B cell (primary cell): ENCODE measurements at regions of chr12 and their contacts with region 1.

Region 1: DNA sequence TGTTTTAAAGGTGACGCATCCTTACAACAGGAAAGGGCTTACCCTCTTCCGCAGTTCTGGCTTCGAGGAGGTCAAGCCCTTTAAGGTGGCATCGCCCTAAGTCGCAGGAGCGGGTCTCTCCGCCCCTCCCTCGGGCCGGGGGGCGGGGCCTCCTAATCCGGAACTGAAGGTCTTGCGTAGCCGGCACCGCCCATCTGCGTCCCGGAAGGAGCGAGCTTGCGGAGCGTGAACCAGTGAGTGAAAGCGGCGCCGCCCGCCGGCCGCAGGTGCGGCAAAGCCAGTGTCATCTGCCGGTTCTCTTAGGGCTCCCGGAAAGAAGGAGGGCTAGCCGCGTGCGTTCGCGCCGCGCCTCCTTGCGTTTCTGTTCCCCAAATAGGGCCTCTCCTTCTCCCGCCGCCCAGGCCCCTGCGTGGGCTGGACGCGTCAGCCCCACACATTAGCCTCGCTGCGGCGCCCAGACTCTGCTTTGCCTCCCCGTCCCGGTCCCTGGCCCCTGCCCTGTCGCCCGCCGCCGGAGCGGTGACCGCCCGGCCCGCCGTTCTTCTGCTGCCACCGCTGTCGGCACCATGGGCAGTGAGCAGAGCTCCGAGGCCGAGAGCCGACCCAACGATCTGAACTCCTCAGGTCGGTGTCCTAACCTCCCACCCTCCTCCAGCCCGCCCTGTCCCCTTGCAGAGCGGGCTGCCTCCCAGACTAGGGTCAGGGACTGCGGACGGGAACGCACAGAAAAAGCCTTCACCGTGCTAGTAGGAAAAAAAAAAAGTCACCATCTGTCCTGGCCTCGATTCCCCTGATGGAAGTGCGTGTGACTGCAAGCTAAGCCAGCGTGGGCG is at the start of gene BORCS5:
- DNase-seq: peak; percentile 100
- ATAC-seq: peak; percentile 92
- H3K4me3 ChIP-seq: peak within 1 kb of the TSS; percentile 74 to 93 (median 81)
- H3K4me3 Mint-ChIP-seq: peak within 1 kb of the TSS; percentile 92
- H3K27ac ChIP-seq: peak within 1 kb of the TSS; percentile 91 to 95
- H3K27ac Mint-ChIP-seq: peak within 1 kb of the TSS; percentile 94
- H3K4me1 ChIP-seq: peaks cover 21 to 25% of the 10 kb centered on the region in 2 donors
- H3K4me1 Mint-ChIP-seq: peaks cover 31% of the 10 kb centered on the region
- H3K27me3 ChIP-seq: no peaks in the 10 kb centered on the region
- H3K27me3 Mint-ChIP-seq: peaks cover 3% of the 10 kb centered on the region
- CTCF ChIP-seq: peak; percentile 11
- total RNA-seq, gene BORCS5: 46.2 and 51.7 TPM in 2 replicates

Region 2: GRCh38 chr12:11836282-11837151 is 520.6 kb before region 1 on chr12:
- CTCF ChIA-PET with region 1: no interaction called
- POLR2A ChIA-PET with region 1: no interaction called
- intact Hi-C with region 1: loop called (anchors 10 kb)
- DNase-seq: peak; percentile 93
- ATAC-seq: peak; percentile 96
- H3K4me3 ChIP-seq: peak overlapping the region in 2 of 5 experiments; percentile 6 to 37
- H3K4me3 Mint-ChIP-seq: peak overlapping the region; percentile 64
- H3K27ac ChIP-seq: peak overlapping the region; percentile 74 to 77
- H3K27ac Mint-ChIP-seq: peak overlapping the region; percentile 92
- H3K4me1 ChIP-seq: peaks cover 37 to 53% of the 10 kb centered on the region in 2 donors
- H3K4me1 Mint-ChIP-seq: peaks cover 67% of the 10 kb centered on the region
- H3K27me3 ChIP-seq: no peaks in the 10 kb centered on the region
- H3K27me3 Mint-ChIP-seq: no peaks in the 10 kb centered on the region
- CTCF ChIP-seq: no peak

Region 3: DNA sequence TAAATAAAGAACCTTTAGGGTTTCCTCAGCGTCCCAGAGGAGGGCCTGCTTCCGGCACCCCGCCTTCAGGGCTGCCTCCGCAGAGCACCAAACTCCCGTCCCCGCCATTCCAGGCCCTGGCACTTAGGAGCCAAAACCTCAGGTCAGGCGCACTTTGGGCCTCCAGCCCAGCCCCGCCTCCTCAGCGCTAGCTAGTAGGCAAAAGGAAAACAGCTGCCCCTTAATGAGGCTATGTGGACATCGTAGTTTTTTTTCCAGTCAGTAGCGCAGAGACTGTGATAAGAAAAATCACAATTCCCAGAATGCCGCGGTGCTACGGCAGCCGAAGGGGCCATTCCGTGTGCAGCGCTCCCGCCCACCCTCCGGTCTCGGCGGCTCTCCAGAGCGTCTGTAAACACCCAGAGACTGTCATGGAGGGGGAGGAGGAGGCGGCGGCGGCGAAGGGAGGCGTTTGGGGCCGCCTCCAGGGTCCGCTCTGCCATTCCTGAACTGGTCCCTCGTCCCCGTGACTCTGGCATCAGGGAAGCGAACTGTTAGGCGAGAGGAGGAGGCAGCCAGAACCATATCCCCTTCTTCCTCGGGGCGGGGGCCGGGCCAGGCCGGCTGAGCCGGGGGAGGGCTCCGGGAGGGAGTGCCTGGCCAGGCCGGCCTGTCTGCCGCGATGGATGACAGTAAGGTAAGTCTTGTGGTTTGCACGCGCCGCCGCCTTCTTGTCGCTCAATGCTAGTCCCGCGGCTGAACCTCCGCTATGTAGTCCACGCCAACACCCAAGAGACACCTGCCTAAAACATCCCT is 254.6 kb after region 1 on chr12 and contains the start of gene CREBL2:
- CTCF ChIA-PET with region 1: interaction called, 6 read pairs
- POLR2A ChIA-PET with region 1: interaction called, 6 read pairs
- intact Hi-C with region 1: loop called (anchors 1 kb)
- DNase-seq: peak; percentile 94
- ATAC-seq: peak; percentile 91
- H3K4me3 ChIP-seq: peak within 1 kb of the TSS; percentile 65 to 100 (median 89)
- H3K4me3 Mint-ChIP-seq: peak within 1 kb of the TSS; percentile 97
- H3K27ac ChIP-seq: peak within 1 kb of the TSS; percentile 92 to 95
- H3K27ac Mint-ChIP-seq: peak within 1 kb of the TSS; percentile 98
- H3K4me1 ChIP-seq: peaks cover 16 to 24% of the 10 kb centered on the region in 2 donors
- H3K4me1 Mint-ChIP-seq: peaks cover 32% of the 10 kb centered on the region
- H3K27me3 ChIP-seq: no peaks in the 10 kb centered on the region
- H3K27me3 Mint-ChIP-seq: no peaks in the 10 kb centered on the region
- CTCF ChIP-seq: no peak
- total RNA-seq, gene CREBL2: 20.2 and 22.1 TPM in 2 replicates

Region 4: DNA sequence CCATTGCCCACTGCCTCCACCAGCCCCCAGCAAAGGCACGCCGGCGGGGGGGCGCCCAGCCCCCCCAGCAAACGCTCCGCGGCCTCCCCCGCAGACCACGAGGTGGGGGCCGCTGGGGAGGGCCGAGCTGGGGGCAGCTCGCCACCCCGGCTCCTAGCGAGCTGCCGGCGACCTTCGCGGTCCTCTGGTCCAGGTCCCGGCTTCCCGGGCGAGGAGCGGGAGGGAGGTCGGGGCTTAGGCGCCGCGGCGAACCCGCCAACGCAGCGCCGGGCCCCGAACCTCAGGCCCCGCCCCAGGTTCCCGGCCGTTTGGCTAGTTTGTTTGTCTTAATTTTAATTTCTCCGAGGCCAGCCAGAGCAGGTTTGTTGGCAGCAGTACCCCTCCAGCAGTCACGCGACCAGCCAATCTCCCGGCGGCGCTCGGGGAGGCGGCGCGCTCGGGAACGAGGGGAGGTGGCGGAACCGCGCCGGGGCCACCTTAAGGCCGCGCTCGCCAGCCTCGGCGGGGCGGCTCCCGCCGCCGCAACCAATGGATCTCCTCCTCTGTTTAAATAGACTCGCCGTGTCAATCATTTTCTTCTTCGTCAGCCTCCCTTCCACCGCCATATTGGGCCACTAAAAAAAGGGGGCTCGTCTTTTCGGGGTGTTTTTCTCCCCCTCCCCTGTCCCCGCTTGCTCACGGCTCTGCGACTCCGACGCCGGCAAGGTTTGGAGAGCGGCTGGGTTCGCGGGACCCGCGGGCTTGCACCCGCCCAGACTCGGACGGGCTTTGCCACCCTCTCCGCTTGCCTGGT is 359.9 kb after region 1 on chr12 and contains the start of gene CDKN1B:
- CTCF ChIA-PET with region 1: interaction called, 17 read pairs
- POLR2A ChIA-PET with region 1: interaction called, 54 read pairs
- intact Hi-C with region 1: loop called (anchors 1 kb)
- DNase-seq: peak; percentile 92
- ATAC-seq: peak; percentile 64
- H3K4me3 ChIP-seq: peak within 1 kb of the TSS; percentile 82 to 100 (median 96)
- H3K4me3 Mint-ChIP-seq: peak within 1 kb of the TSS; percentile 97
- H3K27ac ChIP-seq: peak within 1 kb of the TSS; percentile 94 to 96
- H3K27ac Mint-ChIP-seq: peak within 1 kb of the TSS; percentile 98
- H3K4me1 ChIP-seq: peaks cover 49 to 53% of the 10 kb centered on the region in 2 donors
- H3K4me1 Mint-ChIP-seq: peaks cover 66% of the 10 kb centered on the region
- H3K27me3 ChIP-seq: no peaks in the 10 kb centered on the region
- H3K27me3 Mint-ChIP-seq: no peaks in the 10 kb centered on the region
- CTCF ChIP-seq: no peak
- total RNA-seq, gene CDKN1B: 133 and 149 TPM in 2 replicates

Region 5: GRCh38 chr12:12803186-12803585 is 446.1 kb after region 1 on chr12:
- CTCF ChIA-PET with region 1: no interaction called
- POLR2A ChIA-PET with region 1: no interaction called
- intact Hi-C with region 1: loop called (anchors 1 kb)
- DNase-seq: peak; percentile 45
- ATAC-seq: peak; percentile 51
- H3K4me3 ChIP-seq: no peak overlapping the region
- H3K4me3 Mint-ChIP-seq: peak overlapping the region; percentile 80
- H3K27ac ChIP-seq: no peak overlapping the region
- H3K27ac Mint-ChIP-seq: peak overlapping the region; percentile 86
- H3K4me1 ChIP-seq: peaks cover 23 to 45% of the 10 kb centered on the region in 2 donors
- H3K4me1 Mint-ChIP-seq: peaks cover 56% of the 10 kb centered on the region
- H3K27me3 ChIP-seq: no peaks in the 10 kb centered on the region
- H3K27me3 Mint-ChIP-seq: no peaks in the 10 kb centered on the region
- CTCF ChIP-seq: no peak